Activated B cell treated with CpG ODN at 0.5 μM for 24 hours (primary cell): ENCODE measurements at regions of chr1 and their contacts with region 1.

Region 1: GRCh38 chr1:221097479-221098383 is 218.5 kb downstream of the HLX start:
- DNase-seq: no peak
- ATAC-seq: no peak
- H3K4me3 Mint-ChIP-seq: no peak overlapping the region
- H3K27ac Mint-ChIP-seq: no peak overlapping the region
- H3K4me1 Mint-ChIP-seq: peaks cover 24% of the 10 kb centered on the region
- H3K27me3 Mint-ChIP-seq: no peaks in the 10 kb centered on the region
- CTCF ChIP-seq: no peak

Region 2: GRCh38 chr1:220873868-220874655 is 223.7 kb before region 1 on chr1:
- CTCF ChIA-PET with region 1: interaction called, 21 read pairs
- POLR2A ChIA-PET with region 1: interaction called, 7 read pairs
- intact Hi-C with region 1: loop called (anchors 1 kb)
- DNase-seq: peak; percentile 36
- ATAC-seq: no peak
- H3K4me3 Mint-ChIP-seq: no peak overlapping the region
- H3K27ac Mint-ChIP-seq: no peak overlapping the region
- H3K4me1 Mint-ChIP-seq: peaks cover 30% of the 10 kb centered on the region
- H3K27me3 Mint-ChIP-seq: peaks cover 2% of the 10 kb centered on the region
- CTCF ChIP-seq: no peak

Region 3: DNA sequence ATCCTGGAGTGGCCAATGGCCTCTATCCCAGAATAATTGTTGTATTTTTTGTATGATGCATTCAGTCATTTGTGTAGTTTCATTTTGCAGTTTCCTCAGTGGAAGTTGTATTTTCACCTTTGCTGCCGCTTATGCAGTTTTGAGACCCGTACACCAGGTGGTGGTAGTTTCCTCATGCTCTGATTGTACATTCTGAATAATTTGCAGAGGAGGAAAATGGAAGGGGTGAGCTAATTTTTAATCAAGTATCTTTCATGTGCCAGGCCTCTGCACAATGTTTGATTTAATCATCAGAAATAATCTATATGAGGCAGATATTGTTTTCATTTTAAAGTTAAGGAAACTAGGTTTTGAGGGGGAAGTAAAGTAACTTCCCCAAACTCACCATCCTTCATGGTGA is 189.0 kb before region 1 on chr1:
- CTCF ChIA-PET with region 1: interaction called, 12 read pairs
- POLR2A ChIA-PET with region 1: interaction called, 8 read pairs
- intact Hi-C with region 1: loop called (anchors 1 kb)
- DNase-seq: no peak
- ATAC-seq: peak; percentile 52
- H3K4me3 Mint-ChIP-seq: no peak overlapping the region
- H3K27ac Mint-ChIP-seq: no peak overlapping the region
- H3K4me1 Mint-ChIP-seq: peaks cover 10% of the 10 kb centered on the region
- H3K27me3 Mint-ChIP-seq: peaks cover 9% of the 10 kb centered on the region
- CTCF ChIP-seq: no peak

Region 4: DNA sequence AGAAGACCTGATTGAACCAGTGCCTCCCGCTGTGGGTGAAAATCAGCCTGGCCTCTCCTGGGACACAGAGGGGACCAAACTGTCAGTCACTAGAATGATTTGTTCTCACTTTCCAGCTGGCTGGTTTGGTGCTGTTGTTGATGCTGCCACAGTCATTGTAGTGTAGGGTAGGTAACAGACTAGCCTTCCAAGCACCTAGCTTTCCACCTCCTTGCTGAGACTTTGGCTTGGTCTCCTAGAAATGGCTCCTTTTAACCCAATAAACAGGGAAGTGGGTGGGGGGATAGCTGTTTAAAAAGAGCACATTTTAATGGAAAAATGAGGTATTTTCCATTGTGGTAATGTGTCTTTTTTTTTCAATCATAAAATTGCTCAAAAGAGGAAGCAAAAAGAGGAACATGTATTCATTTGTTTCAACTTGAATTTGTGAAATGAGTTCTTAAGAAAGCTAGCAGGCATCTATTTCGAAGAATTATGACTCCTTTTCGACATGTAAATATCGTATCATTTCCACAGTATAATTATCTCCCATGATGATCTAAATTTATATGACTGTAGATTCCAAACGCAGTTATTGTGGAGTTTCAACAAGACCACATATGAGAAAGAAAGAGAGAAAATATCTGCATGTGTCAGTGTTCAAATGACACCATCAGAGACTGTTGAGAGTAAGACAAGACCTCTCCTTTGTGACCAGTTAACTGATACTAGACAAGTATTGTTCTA is 28.4 kb before region 1 on chr1:
- CTCF ChIA-PET with region 1: interaction called, 13 read pairs
- POLR2A ChIA-PET with region 1: interaction called, 6 read pairs
- intact Hi-C with region 1: loop called (anchors 1 kb)
- DNase-seq: peak; percentile 59
- ATAC-seq: peak; percentile 83
- H3K4me3 Mint-ChIP-seq: peak overlapping the region; percentile 75
- H3K27ac Mint-ChIP-seq: peak overlapping the region; percentile 99
- H3K4me1 Mint-ChIP-seq: peaks cover 85% of the 10 kb centered on the region
- H3K27me3 Mint-ChIP-seq: no peaks in the 10 kb centered on the region
- CTCF ChIP-seq: no peak

Region 5: DNA sequence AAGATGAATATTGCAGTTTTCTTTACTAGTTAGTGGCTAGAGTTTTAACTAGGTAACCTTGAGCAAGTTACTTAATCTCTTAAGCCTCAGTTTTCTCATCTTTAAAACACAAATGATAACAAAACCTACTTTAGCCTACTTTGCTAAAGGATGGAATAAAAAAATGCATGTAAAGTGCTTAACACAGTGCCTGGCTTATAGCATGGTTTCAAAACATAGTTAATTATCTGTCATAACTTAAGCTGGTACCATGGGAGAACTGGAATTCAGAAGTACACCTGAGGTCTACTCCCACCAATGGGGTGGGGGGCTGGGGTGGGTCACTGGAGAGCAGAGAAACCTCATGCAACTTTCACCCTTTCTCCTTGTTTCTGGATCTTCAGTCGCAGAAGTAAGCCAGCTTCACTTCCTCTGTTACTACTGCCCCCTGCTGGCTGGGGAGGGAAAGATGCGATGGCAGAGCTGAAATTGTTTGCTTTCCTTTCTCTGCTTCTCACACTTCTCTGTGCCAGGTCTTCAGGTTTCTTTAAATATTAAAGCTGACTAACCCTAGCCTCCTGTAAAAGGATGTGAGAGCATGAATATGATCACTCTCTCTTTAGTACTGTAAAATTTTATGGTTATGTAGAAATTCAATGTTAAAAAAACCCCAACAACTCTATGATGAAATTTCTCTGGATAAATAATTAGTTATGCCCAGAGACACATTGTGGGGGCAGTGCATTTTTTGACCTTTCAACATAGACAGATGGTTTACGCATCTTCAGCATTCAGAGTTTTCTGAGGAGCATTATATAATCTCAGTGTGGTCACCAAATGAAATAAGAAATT is 105.7 kb after region 1 on chr1:
- CTCF ChIA-PET with region 1: interaction called, 28 read pairs
- POLR2A ChIA-PET with region 1: no interaction called
- intact Hi-C with region 1: loop called (anchors 1 kb)
- DNase-seq: peak; percentile 59
- ATAC-seq: peak; percentile 45
- H3K4me3 Mint-ChIP-seq: no peak overlapping the region
- H3K27ac Mint-ChIP-seq: no peak overlapping the region
- H3K4me1 Mint-ChIP-seq: peaks cover 3% of the 10 kb centered on the region
- H3K27me3 Mint-ChIP-seq: peaks cover 7% of the 10 kb centered on the region
- CTCF ChIP-seq: no peak

Region 6: DNA sequence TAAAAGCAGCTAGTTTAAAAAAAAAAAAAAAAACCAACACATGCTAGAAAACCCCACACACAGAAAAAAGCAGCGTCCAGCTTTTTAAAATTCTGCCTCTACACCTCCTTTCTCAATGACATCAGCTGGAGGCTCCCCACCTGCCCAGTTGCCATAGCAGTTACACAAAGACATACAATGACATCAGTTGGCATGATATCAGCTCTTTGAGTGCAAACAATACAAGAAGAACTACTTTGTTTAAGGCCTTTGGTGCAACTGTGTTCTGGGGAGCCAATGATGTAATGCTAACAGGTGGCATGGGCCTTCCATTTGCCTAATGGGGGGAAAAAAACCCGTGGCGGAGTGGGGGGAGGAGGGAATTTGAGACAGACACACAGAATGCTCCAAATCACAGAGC is 611.3 kb after region 1 on chr1:
- CTCF ChIA-PET with region 1: no interaction called
- POLR2A ChIA-PET with region 1: no interaction called
- intact Hi-C with region 1: no loop called
- DNase-seq: peak; percentile 20
- ATAC-seq: peak; percentile 32
- H3K4me3 Mint-ChIP-seq: peak overlapping the region; percentile 37
- H3K27ac Mint-ChIP-seq: peak overlapping the region; percentile 82
- H3K4me1 Mint-ChIP-seq: peaks cover 60% of the 10 kb centered on the region
- H3K27me3 Mint-ChIP-seq: no peaks in the 10 kb centered on the region
- CTCF ChIP-seq: no peak